Calu3 (cell line): ENCODE measurements at regions of chr9 and their contacts with region 1.

Region 1: GRCh38 chr9:113401027-113401792 is at the start of gene ALAD:
- DNase-seq: peak; percentile 98
- H3K4me3 Mint-ChIP-seq: peak within 1 kb of the TSS; percentile 90
- H3K27ac Mint-ChIP-seq: peak within 1 kb of the TSS; percentile 45
- H3K4me1 Mint-ChIP-seq: peaks cover 18% of the 10 kb centered on the region
- H3K27me3 Mint-ChIP-seq: no peaks in the 10 kb centered on the region
- CTCF ChIP-seq: peak; percentile 80
- total RNA-seq, gene ALAD: 20.6 and 24.1 TPM in 2 replicates

Region 2: DNA sequence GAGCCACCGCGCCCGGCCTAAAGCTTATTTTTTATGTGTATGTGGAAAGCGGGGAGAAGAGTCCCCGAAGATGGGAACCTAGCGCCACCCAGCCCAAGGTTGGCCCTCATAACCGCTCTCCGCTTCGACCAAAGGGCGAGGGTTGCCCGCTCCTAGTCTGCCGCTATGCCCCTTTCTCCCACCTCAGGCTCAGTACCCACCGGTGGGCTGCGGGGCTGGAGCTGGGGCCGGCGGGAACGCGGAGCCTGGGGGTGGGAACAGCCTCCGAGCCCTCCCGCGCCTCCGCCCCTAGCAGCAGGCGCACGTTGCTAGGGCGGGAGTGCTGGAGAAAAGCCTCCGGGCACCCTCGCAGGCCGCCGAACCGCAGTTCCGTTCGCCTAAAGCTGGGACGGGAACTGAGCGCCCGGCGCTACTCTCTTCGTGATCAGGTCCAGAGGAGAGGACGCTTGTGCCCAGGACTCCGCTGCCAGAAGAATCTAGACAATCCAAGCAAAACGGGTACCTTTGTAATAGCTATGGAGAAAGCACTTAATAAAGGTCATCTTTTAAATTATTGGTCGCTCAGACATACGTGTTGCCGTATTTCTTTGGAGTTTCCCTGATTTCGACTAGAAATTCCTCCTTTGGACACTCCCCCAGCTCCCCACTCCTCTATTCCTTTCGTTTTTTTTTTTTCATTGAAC is 61.1 kb before region 1 on chr9 and contains the start of gene WDR31:
- CTCF ChIA-PET with region 1: interaction called, 3 read pairs
- intact Hi-C with region 1: loop called (anchors 5 kb)
- DNase-seq: peak; percentile 88
- H3K4me3 Mint-ChIP-seq: peak within 1 kb of the TSS; percentile 76
- H3K27ac Mint-ChIP-seq: peak within 1 kb of the TSS; percentile 76
- H3K4me1 Mint-ChIP-seq: peaks cover 39% of the 10 kb centered on the region
- H3K27me3 Mint-ChIP-seq: no peaks in the 10 kb centered on the region
- CTCF ChIP-seq: no peak
- total RNA-seq, gene WDR31: 3.1 and 4.0 TPM in 2 replicates

Region 3: GRCh38 chr9:113376634-113377567 is 24.3 kb before region 1 on chr9 and contains the start of gene HDHD3:
- CTCF ChIA-PET with region 1: interaction called, 5 read pairs
- intact Hi-C with region 1: loop called (anchors 2 kb)
- DNase-seq: peak; percentile 84
- H3K4me3 Mint-ChIP-seq: peak within 1 kb of the TSS; percentile 79
- H3K27ac Mint-ChIP-seq: peak within 1 kb of the TSS; percentile 82
- H3K4me1 Mint-ChIP-seq: peaks cover 24% of the 10 kb centered on the region
- H3K27me3 Mint-ChIP-seq: no peaks in the 10 kb centered on the region
- CTCF ChIP-seq: no peak
- total RNA-seq, gene HDHD3: 30.8 and 35.2 TPM in 2 replicates

Region 4: DNA sequence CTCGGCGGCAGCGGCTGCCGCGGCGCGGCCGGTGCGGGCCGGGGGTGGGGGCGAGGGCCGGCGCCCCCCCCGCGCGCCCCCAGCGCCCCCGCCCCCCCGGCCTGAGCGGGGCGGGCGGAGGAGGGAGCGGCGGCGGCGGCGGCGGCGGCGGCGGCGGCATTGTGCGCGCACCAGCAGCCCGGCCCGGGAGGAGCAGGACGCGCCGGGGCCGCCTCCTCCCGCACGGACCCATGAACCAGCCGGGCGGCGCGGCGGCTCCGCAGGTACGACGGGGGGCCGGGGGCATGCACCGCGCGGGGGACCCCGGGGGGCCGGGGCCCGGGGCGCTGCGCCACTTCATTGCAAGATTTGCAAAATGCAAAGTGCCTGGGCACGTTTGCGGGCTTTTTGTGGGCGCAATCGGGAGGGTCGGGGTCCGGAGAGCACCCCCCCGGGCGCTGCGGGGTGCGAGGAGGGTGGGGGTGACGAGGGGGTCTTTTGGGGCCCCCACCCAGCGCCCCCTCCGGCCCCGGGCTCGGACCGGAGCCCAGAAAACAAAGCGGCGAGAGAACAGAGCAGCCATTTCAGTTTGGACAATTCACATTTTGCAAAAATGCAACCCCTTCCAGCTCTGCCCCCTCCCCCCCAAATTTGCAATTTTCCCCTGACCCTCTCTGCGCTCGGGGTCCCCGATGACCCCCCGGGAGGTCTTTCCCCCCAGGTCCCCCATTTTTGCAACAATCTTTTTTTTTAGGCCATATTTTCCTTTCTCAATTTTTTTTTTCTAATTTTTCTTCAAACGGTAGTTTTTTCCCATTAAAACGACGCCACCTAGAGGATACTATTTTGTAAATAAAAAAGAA is 475.2 kb after region 1 on chr9 and contains the start of gene ZNF618:
- CTCF ChIA-PET with region 1: no interaction called
- intact Hi-C with region 1: no loop called
- DNase-seq: peak; percentile 33
- H3K4me3 Mint-ChIP-seq: peak within 1 kb of the TSS; percentile 85
- H3K27ac Mint-ChIP-seq: peak within 1 kb of the TSS; percentile 96
- H3K4me1 Mint-ChIP-seq: no peaks in the 10 kb centered on the region
- H3K27me3 Mint-ChIP-seq: peaks cover 3% of the 10 kb centered on the region
- CTCF ChIP-seq: no peak
- total RNA-seq, gene ZNF618: 18.0 and 20.3 TPM in 2 replicates